Posterior cingulate gyrus (tissue), 11 donors: ENCODE measurements at regions of chr1 and their contacts with region 1.

Region 1: DNA sequence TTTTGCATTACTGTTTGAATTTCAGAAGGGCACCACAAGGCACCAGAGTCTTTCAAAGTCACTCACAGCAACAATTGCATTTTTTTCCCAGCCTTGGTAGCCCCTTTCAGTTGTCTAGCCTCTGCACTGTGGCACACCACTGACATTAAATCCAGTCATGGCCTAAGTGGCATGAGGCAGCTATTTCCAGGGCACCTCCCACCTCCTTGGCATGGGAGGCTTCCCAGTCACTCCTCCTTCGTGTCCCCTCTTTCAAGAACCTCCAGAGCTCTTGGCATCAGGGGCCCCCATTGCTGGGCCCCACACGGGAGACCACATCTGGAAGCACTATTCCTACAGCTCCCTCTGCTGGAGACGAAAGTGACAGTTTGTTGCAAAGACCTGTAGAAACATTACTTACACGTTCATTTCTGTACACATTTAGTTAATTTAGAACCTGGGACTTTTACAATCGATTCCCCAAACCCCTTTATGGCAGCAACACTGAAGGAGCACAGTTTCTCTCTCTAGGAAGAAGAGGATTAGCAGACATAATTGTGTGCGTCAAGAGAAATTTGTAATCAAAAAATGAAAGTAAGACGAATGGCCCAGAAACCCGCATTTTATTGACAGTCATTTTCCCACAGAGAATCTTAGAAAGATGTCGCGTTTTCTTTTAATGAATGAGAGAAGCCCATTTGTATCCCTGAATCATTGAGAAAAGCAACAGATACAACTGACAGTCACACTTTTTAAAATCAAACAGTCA is 5.7 kb upstream of the CHD5 start:
- DNase-seq: peak in 1 of 10 donors; percentile 17

Region 2: GRCh38 chr1:6016191-6016865 is 169.5 kb before region 1 on chr1:
- intact Hi-C with region 1: no loop called
- DNase-seq: peak in 4 of 10 donors; percentile 23 to 84 (median 65)

Region 3: GRCh38 chr1:6052543-6053205 is 133.1 kb before region 1 on chr1:
- intact Hi-C with region 1: loop called (anchors 5 kb)
- DNase-seq: peak in 3 of 10 donors; percentile 36 to 61 (median 52)